Tibial artery (tissue), 4 donors: ENCODE measurements at regions of chr13 and their contacts with region 1.

Region 1: DNA sequence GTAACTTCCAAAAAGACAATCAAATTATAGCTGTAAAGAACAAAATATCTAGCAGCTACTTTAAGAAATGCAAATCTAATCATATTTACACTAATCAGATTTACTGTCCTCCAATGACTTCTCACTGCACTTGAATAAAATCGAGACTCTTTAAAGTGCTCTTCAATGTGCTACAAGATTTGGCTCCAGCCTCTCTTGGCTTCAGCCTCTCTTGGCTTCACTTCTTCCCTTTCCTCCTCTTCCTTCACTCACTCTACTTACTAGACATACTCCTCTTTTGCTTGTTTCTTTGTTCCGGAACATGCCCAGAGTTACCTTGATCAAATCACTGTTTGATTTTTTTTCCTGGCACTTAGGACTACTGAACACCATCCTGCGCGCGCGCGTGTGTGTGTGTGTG is 495.4 kb downstream of the LMO7 start:
- DNase-seq: no peak
- H3K4me3 ChIP-seq: no peak overlapping the region
- H3K27ac ChIP-seq: no peak overlapping the region
- H3K4me1 ChIP-seq: peaks cover 0 to 3% (median 0%) of the 10 kb centered on the region in 4 donors
- H3K27me3 ChIP-seq: no peaks in the 10 kb centered on the region
- CTCF ChIP-seq: no peak

Region 2: GRCh38 chr13:76148926-76149325 is 17.4 kb after region 1 on chr13:
- intact Hi-C with region 1: loop called (anchors 1 kb)
- DNase-seq: no peak
- H3K4me3 ChIP-seq: no peak overlapping the region
- H3K27ac ChIP-seq: no peak overlapping the region
- H3K4me1 ChIP-seq: peaks cover 0 to 7% (median 0%) of the 10 kb centered on the region in 4 donors
- H3K27me3 ChIP-seq: no peaks in the 10 kb centered on the region
- CTCF ChIP-seq: no peak